ENCODE measurements at regions of chr15 and their contacts with region 1.

Region 1: GRCh38 chr15:42704492-42704926 is 32.4 kb downstream of the CDAN1 start:
- DNase-seq: peak in 1 of 2 experiments; percentile 67
- H3K4me3 ChIP-seq: no peak overlapping the region
- H3K27ac ChIP-seq: no peak overlapping the region
- H3K4me1 ChIP-seq: no peaks in the 10 kb centered on the region; the same call in 1 of the 2 replicates
- H3K27me3 ChIP-seq: no peaks in the 10 kb centered on the region
- CTCF ChIP-seq: peak; percentile 75

Region 2: GRCh38 chr15:43185157-43186017 is 480.9 kb after region 1 on chr15 and contains the start of gene CCNDBP1:
- CTCF ChIA-PET with region 1: no interaction called
- POLR2A ChIA-PET with region 1: no interaction called
- intact Hi-C with region 1: loop called (anchors 5 kb)
- DNase-seq: peak; percentile 80 to 96
- H3K4me3 ChIP-seq: peak within 1 kb of the TSS; percentile 80
- H3K27ac ChIP-seq: peak within 1 kb of the TSS; percentile 71
- H3K4me1 ChIP-seq: peaks cover 30% of the 10 kb centered on the region
- H3K27me3 ChIP-seq: no peaks in the 10 kb centered on the region
- CTCF ChIP-seq: peak; percentile 29; the same call in 1 of the 2 replicates
- total RNA-seq, gene CCNDBP1: 44.0 and 50.2 TPM in 2 replicates

Region 3: GRCh38 chr15:43204016-43204901 is 499.8 kb after region 1 on chr15:
- CTCF ChIA-PET with region 1: no interaction called
- POLR2A ChIA-PET with region 1: no interaction called
- intact Hi-C with region 1: loop called (anchors 2 kb)
- DNase-seq: no peak
- H3K4me3 ChIP-seq: no peak overlapping the region
- H3K27ac ChIP-seq: no peak overlapping the region
- H3K4me1 ChIP-seq: no peaks in the 10 kb centered on the region
- H3K27me3 ChIP-seq: no peaks in the 10 kb centered on the region
- CTCF ChIP-seq: peak; percentile 54

Region 4: DNA sequence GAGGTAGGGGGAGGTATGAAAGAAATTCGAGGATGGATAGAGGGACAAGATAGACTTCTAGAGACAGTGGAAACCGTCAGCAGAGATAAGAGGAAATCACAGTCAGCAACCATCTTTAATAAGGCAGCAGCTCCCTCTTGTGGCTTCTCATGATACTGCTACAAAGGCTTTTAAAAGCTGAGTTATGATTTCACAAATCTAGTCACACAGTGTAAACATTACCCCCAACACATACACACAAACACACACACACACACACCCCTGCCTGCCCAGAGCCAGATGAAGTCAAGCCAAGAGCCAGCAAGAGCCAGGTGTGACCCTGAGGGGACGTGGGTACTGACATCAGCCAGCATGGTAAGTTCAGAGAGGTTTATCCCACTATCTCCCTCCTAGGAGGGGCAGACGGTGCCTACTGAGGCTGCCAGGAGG is 581.1 kb after region 1 on chr15:
- CTCF ChIA-PET with region 1: no interaction called
- POLR2A ChIA-PET with region 1: no interaction called
- intact Hi-C with region 1: loop called (anchors 5 kb)
- DNase-seq: peak; percentile 45 to 46
- H3K4me3 ChIP-seq: no peak overlapping the region
- H3K27ac ChIP-seq: no peak overlapping the region
- H3K4me1 ChIP-seq: peaks cover 9% of the 10 kb centered on the region
- H3K27me3 ChIP-seq: no peaks in the 10 kb centered on the region
- CTCF ChIP-seq: peak; percentile 87

Measured in PC-9 (cell line).